ENCODE measurements at regions of chr3 and their contacts with region 1.

Region 1: DNA sequence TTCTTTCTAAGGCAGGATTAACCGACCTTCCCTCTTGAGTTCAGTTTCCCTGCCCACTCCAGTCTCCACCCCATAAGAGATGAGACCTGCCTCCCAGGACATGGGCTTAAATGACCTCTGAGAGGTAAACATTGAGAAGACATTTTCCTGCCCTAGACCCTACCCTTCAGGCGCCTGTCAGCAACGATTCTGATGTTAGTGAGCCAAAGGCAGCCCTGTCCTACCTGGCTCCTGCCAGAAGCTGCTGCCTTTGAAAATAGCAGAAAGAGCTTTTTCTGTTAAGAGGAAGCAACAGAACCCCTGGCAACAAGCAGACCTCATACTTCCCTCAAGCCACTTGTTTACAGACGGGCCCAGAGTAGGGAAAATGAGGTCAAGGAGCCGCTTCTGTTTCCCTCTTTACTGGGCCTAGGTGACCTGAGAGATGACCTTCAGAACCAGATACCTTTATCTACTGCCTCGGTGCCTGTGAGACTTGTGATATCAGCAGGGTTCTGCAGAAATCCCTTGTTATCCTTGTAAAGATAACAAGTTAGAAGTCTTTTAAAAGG is 52.0 kb downstream of the CD200R1L start:
- DNase-seq: peak in 4 of 5 donors; percentile 17 to 25 (median 22)
- H3K4me3 ChIP-seq: no peak overlapping the region
- H3K4me3 Mint-ChIP-seq: peak overlapping the region; percentile 26 to 84 (median 68)
- H3K27ac ChIP-seq: peak overlapping the region; percentile 1
- H3K27ac Mint-ChIP-seq: peak overlapping the region; percentile 46 to 94 (median 88)
- H3K4me1 ChIP-seq: peaks cover 33% of the 10 kb centered on the region
- H3K4me1 Mint-ChIP-seq: peaks cover 26 to 36% (median 31%) of the 10 kb centered on the region in 4 donors
- H3K27me3 ChIP-seq: no peaks in the 10 kb centered on the region
- H3K27me3 Mint-ChIP-seq: no peaks in the 10 kb centered on the region

Region 2: DNA sequence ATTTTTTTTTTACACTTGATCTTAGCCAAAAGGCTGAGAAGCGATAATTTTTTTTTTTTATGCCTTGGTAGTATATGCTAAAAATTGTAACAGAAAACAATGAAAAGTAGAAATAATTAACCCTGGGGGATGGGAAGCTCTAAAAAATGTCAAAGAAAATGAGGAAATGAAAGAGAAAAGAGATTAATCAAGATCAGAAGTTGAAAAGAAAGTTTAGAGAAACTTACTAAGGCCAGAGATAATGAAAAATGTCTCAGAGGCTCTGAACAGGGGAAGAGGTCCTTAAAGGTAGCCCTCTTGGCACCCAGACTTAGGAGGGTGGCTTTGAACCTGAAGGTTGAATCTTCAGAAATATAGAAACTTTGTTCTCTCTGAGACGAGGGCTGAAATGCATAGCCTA is 1140.9 kb before region 1 on chr3:
- CTCF ChIA-PET with region 1: no interaction called
- POLR2A ChIA-PET with region 1: no interaction called
- intact Hi-C with region 1: no loop called
- DNase-seq: no peak
- H3K4me3 ChIP-seq: no peak overlapping the region
- H3K4me3 Mint-ChIP-seq: no peak overlapping the region
- H3K27ac ChIP-seq: no peak overlapping the region
- H3K27ac Mint-ChIP-seq: peak overlapping the region in 5 of 7 donors; percentile 1 to 78 (median 58)
- H3K4me1 ChIP-seq: no peaks in the 10 kb centered on the region
- H3K4me1 Mint-ChIP-seq: peaks cover 3 to 6% (median 5%) of the 10 kb centered on the region in 4 donors
- H3K27me3 ChIP-seq: no peaks in the 10 kb centered on the region
- H3K27me3 Mint-ChIP-seq: no peaks in the 10 kb centered on the region

Region 3: DNA sequence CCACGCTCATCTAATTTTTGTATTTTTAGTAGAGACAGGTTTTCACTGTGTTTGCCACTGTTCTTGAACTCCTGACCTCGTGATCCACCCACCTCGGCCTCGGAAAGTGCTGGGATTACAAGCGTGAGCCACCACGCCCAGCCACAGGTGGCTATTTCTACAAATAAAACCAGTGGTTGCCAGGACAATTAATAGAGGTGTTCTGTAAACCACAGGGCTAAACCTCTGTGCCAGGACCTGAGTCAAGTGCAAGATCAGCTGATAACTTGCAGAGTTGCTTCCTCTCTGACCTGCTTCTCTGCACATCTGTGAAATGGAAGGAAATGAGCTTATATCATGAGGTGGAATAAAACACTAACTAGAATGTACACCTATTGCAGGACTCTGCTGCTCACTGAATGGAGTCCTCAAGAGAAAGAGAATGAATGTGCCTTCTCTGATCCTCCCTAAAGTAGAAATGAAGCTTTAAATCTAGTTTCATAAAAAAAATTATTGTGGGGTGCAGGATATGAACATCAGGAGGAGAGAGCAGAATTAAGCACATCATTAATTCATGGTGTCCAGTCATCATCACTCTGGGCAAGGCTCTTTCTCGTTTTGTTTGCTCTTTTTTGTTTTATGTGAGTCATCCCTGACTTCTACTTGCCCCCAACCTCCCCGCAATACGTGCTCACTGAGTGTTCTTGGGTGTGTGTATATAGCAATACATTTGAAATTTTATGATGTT is 20.7 kb before region 1 on chr3:
- CTCF ChIA-PET with region 1: interaction called, 3 read pairs
- POLR2A ChIA-PET with region 1: interaction called, 10 read pairs
- intact Hi-C with region 1: no loop called
- DNase-seq: peak; percentile 48 to 73 (median 62)
- H3K4me3 ChIP-seq: no peak overlapping the region
- H3K4me3 Mint-ChIP-seq: peak overlapping the region; percentile 51 to 79 (median 69)
- H3K27ac ChIP-seq: peak overlapping the region; percentile 18
- H3K27ac Mint-ChIP-seq: peak overlapping the region; percentile 73 to 89 (median 85)
- H3K4me1 ChIP-seq: peaks cover 68% of the 10 kb centered on the region
- H3K4me1 Mint-ChIP-seq: peaks cover 45 to 82% (median 61%) of the 10 kb centered on the region in 4 donors
- H3K27me3 ChIP-seq: no peaks in the 10 kb centered on the region
- H3K27me3 Mint-ChIP-seq: no peaks in the 10 kb centered on the region

Region 4: GRCh38 chr3:112807685-112808084 is 13.0 kb after region 1 on chr3:
- CTCF ChIA-PET with region 1: interaction called, 3 read pairs
- POLR2A ChIA-PET with region 1: interaction called, 13 read pairs
- intact Hi-C with region 1: loop called (anchors 1 kb)
- DNase-seq: peak; percentile 22 to 51 (median 45)
- H3K4me3 ChIP-seq: no peak overlapping the region
- H3K4me3 Mint-ChIP-seq: peak overlapping the region in 4 of 8 donors; percentile 11 to 42 (median 30)
- H3K27ac ChIP-seq: no peak overlapping the region
- H3K27ac Mint-ChIP-seq: peak overlapping the region in 6 of 7 donors; percentile 38 to 84 (median 54)
- H3K4me1 ChIP-seq: peaks cover 41% of the 10 kb centered on the region
- H3K4me1 Mint-ChIP-seq: peaks cover 29 to 80% (median 54%) of the 10 kb centered on the region in 4 donors
- H3K27me3 ChIP-seq: no peaks in the 10 kb centered on the region
- H3K27me3 Mint-ChIP-seq: no peaks in the 10 kb centered on the region

Region 5: GRCh38 chr3:113111011-113111707 is 316.5 kb after region 1 on chr3:
- CTCF ChIA-PET with region 1: no interaction called
- POLR2A ChIA-PET with region 1: no interaction called
- intact Hi-C with region 1: no loop called
- DNase-seq: peak in 3 of 5 donors; percentile 5 to 50 (median 7)
- H3K4me3 ChIP-seq: no peak overlapping the region
- H3K4me3 Mint-ChIP-seq: peak overlapping the region in 1 of 8 donors; percentile 2
- H3K27ac ChIP-seq: no peak overlapping the region
- H3K27ac Mint-ChIP-seq: peak overlapping the region in 2 of 7 donors; percentile 55 to 59
- H3K4me1 ChIP-seq: peaks cover 8% of the 10 kb centered on the region
- H3K4me1 Mint-ChIP-seq: peaks cover 6 to 18% (median 12%) of the 10 kb centered on the region in 4 donors
- H3K27me3 ChIP-seq: no peaks in the 10 kb centered on the region
- H3K27me3 Mint-ChIP-seq: no peaks in the 10 kb centered on the region